Mucosa of descending colon (tissue), 3 donors: ENCODE measurements at regions of chr18 and their contacts with region 1.

Region 1: DNA sequence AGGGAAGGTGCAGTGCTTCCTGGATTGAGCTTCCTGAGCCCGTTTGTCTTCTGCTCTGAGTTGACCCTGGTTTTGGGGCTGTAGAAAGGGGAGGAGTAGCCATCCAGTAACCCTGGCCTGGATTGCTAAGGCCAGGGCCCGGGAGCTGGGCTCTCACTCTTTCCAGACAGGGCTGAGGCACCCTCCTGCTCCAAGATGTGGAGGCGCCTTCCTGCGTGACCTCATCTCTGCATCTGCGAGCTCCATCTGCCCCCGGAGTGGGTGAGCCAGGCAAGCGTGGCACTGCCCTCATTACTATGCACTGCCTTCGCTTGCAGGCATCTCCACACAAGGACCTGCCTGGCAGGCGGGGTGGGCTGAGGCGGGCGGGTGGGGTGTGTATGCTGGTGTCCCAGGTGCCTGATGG is 58.0 kb downstream of the RAB31 start:
- DNase-seq: no peak
- ATAC-seq: no peak
- H3K4me3 ChIP-seq: no peak overlapping the region
- H3K4me1 ChIP-seq: no peaks in the 10 kb centered on the region
- CTCF ChIP-seq: no peak

Region 2: DNA sequence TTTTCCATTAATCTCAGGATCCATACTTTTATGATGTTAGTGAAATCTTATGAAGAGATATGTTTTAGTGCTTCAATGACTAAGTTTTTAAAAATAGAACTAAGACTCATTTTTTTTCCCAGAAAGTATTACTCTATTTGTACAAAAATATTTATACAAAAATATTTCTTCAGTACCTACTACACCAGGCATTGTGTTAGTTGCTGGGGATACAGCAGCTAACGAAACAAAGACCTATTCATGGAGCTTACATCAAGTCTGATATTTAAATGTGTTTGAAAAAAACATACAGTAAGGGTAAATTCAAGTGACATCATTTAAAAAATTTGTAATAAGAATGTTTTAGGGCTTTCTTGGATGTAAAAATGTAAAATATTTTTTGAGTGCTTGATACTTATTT is 159.3 kb after region 1 on chr18:
- intact Hi-C with region 1: loop called in 1 of 2 experiments (anchors 10 kb)
- DNase-seq: no peak
- ATAC-seq: no peak
- H3K4me3 ChIP-seq: no peak overlapping the region
- H3K4me1 ChIP-seq: peaks cover 39% of the 10 kb centered on the region
- CTCF ChIP-seq: no peak